Adrenal gland (tissue), 19 donors: ENCODE measurements at regions of chr17 and their contacts with region 1.

Region 1: GRCh38 chr17:35312790-35313711 is 60.4 kb downstream of the SLFN11 start:
- DNase-seq: peak; percentile 41 to 74 (median 53)
- H3K4me3 ChIP-seq: peak overlapping the region in 2 of 4 donors; percentile 22 to 44
- H3K27ac ChIP-seq: peak overlapping the region in 1 of 5 donors; percentile 1
- H3K4me1 ChIP-seq: peaks cover 0 to 6% of the 10 kb centered on the region in 2 donors
- H3K27me3 ChIP-seq: no peaks in the 10 kb centered on the region
- CTCF ChIP-seq: peak; percentile 50 to 83 (median 75)
- POLR2A ChIP-seq: no peak

Region 2: DNA sequence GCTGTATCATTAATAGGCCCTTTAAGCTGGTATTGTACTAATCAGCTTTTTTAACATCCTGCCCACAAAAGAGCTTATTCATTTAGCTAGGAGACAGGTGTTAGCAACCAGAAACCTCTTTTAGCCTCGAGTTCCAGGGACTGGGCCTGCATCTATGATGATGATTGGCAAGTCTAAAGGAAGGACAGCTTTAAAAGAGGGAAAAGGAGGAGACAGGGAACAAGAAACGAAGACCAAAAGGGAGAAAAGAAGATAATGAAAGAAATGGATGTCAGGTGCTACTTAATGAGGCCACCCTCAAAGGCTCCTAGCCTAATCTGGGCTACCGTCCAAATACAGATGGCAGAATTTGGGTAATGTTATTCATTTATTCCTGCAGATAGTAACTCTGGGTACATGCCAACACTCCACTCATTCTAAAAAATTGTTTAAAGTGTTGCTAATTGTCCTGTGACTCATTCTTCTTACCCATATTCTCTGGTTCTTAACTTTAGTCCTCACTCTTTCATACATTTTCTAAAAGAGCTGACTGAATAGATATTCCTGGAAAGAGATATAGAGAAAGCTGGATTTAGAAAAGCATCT is 230.9 kb before region 1 on chr17:
- intact Hi-C with region 1: no loop called
- DNase-seq: peak in 5 of 7 donors; percentile 32 to 71 (median 56)
- H3K4me3 ChIP-seq: no peak overlapping the region
- H3K27ac ChIP-seq: peak overlapping the region in 1 of 5 donors; percentile 47
- H3K4me1 ChIP-seq: peaks cover 0 to 21% of the 10 kb centered on the region in 2 donors
- H3K27me3 ChIP-seq: no peaks in the 10 kb centered on the region
- CTCF ChIP-seq: no peak
- POLR2A ChIP-seq: no peak

Region 3: GRCh38 chr17:35161281-35161761 is 151.7 kb before region 1 on chr17:
- intact Hi-C with region 1: loop called in 1 of 2 experiments (anchors 10 kb)
- DNase-seq: no peak
- H3K4me3 ChIP-seq: no peak overlapping the region
- H3K27ac ChIP-seq: no peak overlapping the region
- H3K4me1 ChIP-seq: no peaks in the 10 kb centered on the region
- H3K27me3 ChIP-seq: peaks cover 7% of the 10 kb centered on the region
- CTCF ChIP-seq: no peak
- POLR2A ChIP-seq: no peak

Region 4: GRCh38 chr17:35529866-35530265 is 216.8 kb after region 1 on chr17:
- intact Hi-C with region 1: loop called (anchors 2 to 5 kb)
- DNase-seq: no peak
- H3K4me3 ChIP-seq: no peak overlapping the region
- H3K27ac ChIP-seq: no peak overlapping the region
- H3K4me1 ChIP-seq: no peaks in the 10 kb centered on the region
- H3K27me3 ChIP-seq: peaks cover 3% of the 10 kb centered on the region
- CTCF ChIP-seq: no peak
- POLR2A ChIP-seq: no peak